ENCODE measurements at regions of chr7 and their contacts with region 1.

Region 1: GRCh38 chr7:28921822-28922221 is 36.3 kb downstream of the TRIL start:
- DNase-seq: peak in 21 of 35 experiments; percentile 4 to 67 (median 22)
- ATAC-seq: peak; percentile 67 to 81 (median 76)
- H3K4me3 ChIP-seq: no peak overlapping the region
- H3K4me3 Mint-ChIP-seq: no peak overlapping the region
- H3K27ac ChIP-seq: no peak overlapping the region
- H3K27ac Mint-ChIP-seq: no peak overlapping the region
- H3K4me1 ChIP-seq: peaks cover 4% of the 10 kb centered on the region in 2 experiments
- H3K4me1 Mint-ChIP-seq: peaks cover 14 to 18% (median 17%) of the 10 kb centered on the region in 3 donors
- H3K27me3 ChIP-seq: peaks cover 0 to 2% of the 10 kb centered on the region in 2 experiments
- H3K27me3 Mint-ChIP-seq: no peaks in the 10 kb centered on the region

Region 2: GRCh38 chr7:27784393-27785053 is 1137.3 kb before region 1 on chr7:
- CTCF ChIA-PET with region 1: no interaction called
- POLR2A ChIA-PET with region 1: no interaction called
- DNase-seq: peak in 11 of 35 experiments; percentile 3 to 66 (median 11)
- ATAC-seq: peak in 3 of 4 experiments; percentile 49 to 55 (median 55)
- H3K4me3 ChIP-seq: no peak overlapping the region
- H3K4me3 Mint-ChIP-seq: no peak overlapping the region
- H3K27ac ChIP-seq: no peak overlapping the region
- H3K27ac Mint-ChIP-seq: no peak overlapping the region
- H3K4me1 ChIP-seq: no peaks in the 10 kb centered on the region
- H3K4me1 Mint-ChIP-seq: peaks cover 15 to 22% (median 21%) of the 10 kb centered on the region in 3 donors
- H3K27me3 ChIP-seq: no peaks in the 10 kb centered on the region
- H3K27me3 Mint-ChIP-seq: no peaks in the 10 kb centered on the region

Region 3: GRCh38 chr7:29091715-29092114 is 169.9 kb after region 1 on chr7:
- CTCF ChIA-PET with region 1: interaction called, 3 to 18 read pairs
- POLR2A ChIA-PET with region 1: interaction called in 1 of 2 experiments, 3 read pairs
- DNase-seq: peak in 2 of 35 experiments; percentile 2 to 8
- ATAC-seq: peak in 1 of 4 experiments; percentile 86
- H3K4me3 ChIP-seq: peak overlapping the region in 1 of 2 donors; percentile 52
- H3K4me3 Mint-ChIP-seq: peak overlapping the region; percentile 44 to 82 (median 65)
- H3K27ac ChIP-seq: no peak overlapping the region
- H3K27ac Mint-ChIP-seq: peak overlapping the region in 1 of 2 donors; percentile 94
- H3K4me1 ChIP-seq: peaks cover 0 to 6% of the 10 kb centered on the region in 2 experiments
- H3K4me1 Mint-ChIP-seq: peaks cover 13 to 19% (median 15%) of the 10 kb centered on the region in 3 donors
- H3K27me3 ChIP-seq: peaks cover 0 to 7% of the 10 kb centered on the region in 2 experiments
- H3K27me3 Mint-ChIP-seq: peaks cover 6 to 19% of the 10 kb centered on the region in 2 donors

Region 4: GRCh38 chr7:29105752-29106668 is 184.2 kb after region 1 on chr7:
- CTCF ChIA-PET with region 1: interaction called, 4 to 61 read pairs
- POLR2A ChIA-PET with region 1: no interaction called
- DNase-seq: peak in 4 of 35 experiments; percentile 1 to 40 (median 14)
- ATAC-seq: peak in 2 of 4 experiments; percentile 46 to 64
- H3K4me3 ChIP-seq: no peak overlapping the region
- H3K4me3 Mint-ChIP-seq: no peak overlapping the region
- H3K27ac ChIP-seq: no peak overlapping the region
- H3K27ac Mint-ChIP-seq: no peak overlapping the region
- H3K4me1 ChIP-seq: no peaks in the 10 kb centered on the region
- H3K4me1 Mint-ChIP-seq: peaks cover 0 to 5% (median 2%) of the 10 kb centered on the region in 3 donors
- H3K27me3 ChIP-seq: no peaks in the 10 kb centered on the region
- H3K27me3 Mint-ChIP-seq: peaks cover 1 to 13% of the 10 kb centered on the region in 2 donors

Region 5: GRCh38 chr7:29408841-29409243 is 487.0 kb after region 1 on chr7:
- CTCF ChIA-PET with region 1: interaction called, 58 to 105 read pairs
- POLR2A ChIA-PET with region 1: no interaction called
- DNase-seq: peak in 28 of 35 experiments; percentile 2 to 79 (median 27)
- ATAC-seq: peak; percentile 48 to 62 (median 55)
- H3K4me3 ChIP-seq: no peak overlapping the region
- H3K4me3 Mint-ChIP-seq: no peak overlapping the region
- H3K27ac ChIP-seq: no peak overlapping the region
- H3K27ac Mint-ChIP-seq: no peak overlapping the region
- H3K4me1 ChIP-seq: no peaks in the 10 kb centered on the region
- H3K4me1 Mint-ChIP-seq: no peaks in the 10 kb centered on the region
- H3K27me3 ChIP-seq: no peaks in the 10 kb centered on the region
- H3K27me3 Mint-ChIP-seq: no peaks in the 10 kb centered on the region